ENCODE measurements at regions of chr10 and their contacts with region 1.

Region 1: DNA sequence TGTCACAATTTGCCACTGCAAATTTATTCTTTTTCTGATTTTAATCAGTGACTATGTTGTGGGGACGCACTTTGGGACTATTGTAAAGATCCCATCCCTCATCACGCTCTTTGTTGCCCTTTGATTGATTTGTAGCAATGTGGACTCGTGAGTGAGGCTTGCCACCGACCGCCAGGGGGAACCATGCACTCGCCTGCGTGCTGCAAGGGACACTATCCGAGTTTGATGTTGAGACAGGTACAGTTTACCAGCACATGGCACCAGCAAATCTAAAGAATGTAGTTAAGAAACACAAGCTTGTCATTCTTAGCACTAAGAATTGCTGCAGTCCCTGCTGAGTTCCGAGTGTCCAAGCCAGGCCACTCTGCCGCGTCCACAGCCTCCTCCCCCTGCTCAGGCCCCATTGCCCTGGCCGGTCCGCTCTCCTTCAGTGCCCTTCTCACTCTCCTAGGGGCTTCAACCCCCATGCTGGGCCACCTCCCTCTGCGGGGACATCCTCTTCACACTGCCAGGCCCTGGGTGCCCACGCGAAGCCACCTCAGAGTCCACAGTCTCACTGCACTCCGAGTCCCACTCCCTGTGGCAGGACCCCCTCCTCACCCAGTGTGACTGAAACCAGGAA is 2.0 kb upstream of the SFTPA2 start:
- DNase-seq: peak in 1 of 2 donors; percentile 53
- H3K4me3 ChIP-seq: no peak overlapping the region
- H3K27ac ChIP-seq: no peak overlapping the region
- H3K4me1 ChIP-seq: peaks cover 0 to 6% (median 2%) of the 10 kb centered on the region in 4 donors
- H3K27me3 ChIP-seq: no peaks in the 10 kb centered on the region
- CTCF ChIP-seq: peak; percentile 58 to 67

Region 2: GRCh38 chr10:79938728-79939406 is 376.6 kb after region 1 on chr10:
- intact Hi-C with region 1: loop called (anchors 10 kb)
- DNase-seq: peak; percentile 63 to 74
- H3K4me3 ChIP-seq: no peak overlapping the region
- H3K27ac ChIP-seq: no peak overlapping the region
- H3K4me1 ChIP-seq: no peaks in the 10 kb centered on the region
- H3K27me3 ChIP-seq: no peaks in the 10 kb centered on the region
- CTCF ChIP-seq: no peak